ENCODE measurements at regions of chr1 and their contacts with region 1.

Region 1: GRCh38 chr1:32321712-32322291 is 14.2 kb downstream of the MARCKSL1 start:
- DNase-seq: no peak
- H3K4me3 ChIP-seq: no peak overlapping the region
- H3K27ac ChIP-seq: no peak overlapping the region
- H3K4me1 ChIP-seq: no peaks in the 10 kb centered on the region
- H3K27me3 ChIP-seq: no peaks in the 10 kb centered on the region
- CTCF ChIP-seq: no peak

Region 2: DNA sequence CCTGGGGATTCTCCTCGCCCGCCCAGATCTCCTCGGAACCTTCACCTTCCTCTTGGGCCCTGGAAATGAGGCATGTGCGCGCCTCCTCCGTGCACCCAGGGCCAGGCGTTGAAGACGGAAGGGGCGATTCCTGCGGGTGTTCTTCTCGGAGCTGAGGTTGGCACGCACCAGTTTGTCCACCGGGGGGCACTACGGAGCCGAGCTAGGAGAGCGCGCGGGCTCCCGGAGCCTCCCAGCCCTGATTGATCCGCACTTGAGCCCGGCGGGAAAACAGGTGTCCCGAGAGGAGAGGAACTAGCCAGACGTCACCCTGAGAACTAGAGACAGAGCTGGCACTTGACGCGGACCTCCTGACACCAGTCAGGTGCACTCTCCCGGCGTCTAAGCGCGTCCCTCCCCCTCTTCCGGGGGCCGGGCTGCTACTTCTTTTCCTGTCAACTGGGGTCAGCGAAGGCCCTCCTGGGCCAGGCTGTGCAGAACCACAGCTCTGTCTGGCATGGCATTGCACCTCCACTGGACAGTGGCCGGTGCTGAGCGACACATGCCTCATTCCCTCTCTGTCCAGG is 927.1 kb before region 1 on chr1:
- CTCF ChIA-PET with region 1: no interaction called
- dilution Hi-C with region 1: no loop called
- in situ Hi-C with region 1: no loop called
- intact Hi-C with region 1: no loop called
- DNase-seq: peak; percentile 87
- H3K4me3 ChIP-seq: no peak overlapping the region
- H3K27ac ChIP-seq: no peak overlapping the region
- H3K4me1 ChIP-seq: peaks cover 42% of the 10 kb centered on the region
- H3K27me3 ChIP-seq: no peaks in the 10 kb centered on the region
- CTCF ChIP-seq: peak; percentile 83 to 95

Region 3: GRCh38 chr1:32215629-32216480 is 105.9 kb before region 1 on chr1:
- CTCF ChIA-PET with region 1: no interaction called
- dilution Hi-C with region 1: no loop called
- in situ Hi-C with region 1: no loop called
- intact Hi-C with region 1: no loop called
- DNase-seq: peak; percentile 39
- H3K4me3 ChIP-seq: no peak overlapping the region
- H3K27ac ChIP-seq: no peak overlapping the region
- H3K4me1 ChIP-seq: peaks cover 12% of the 10 kb centered on the region
- H3K27me3 ChIP-seq: no peaks in the 10 kb centered on the region
- CTCF ChIP-seq: peak; percentile 84 to 91

Region 4: GRCh38 chr1:32307323-32307722 is 14.5 kb before region 1 on chr1:
- CTCF ChIA-PET with region 1: no interaction called
- dilution Hi-C with region 1: no loop called
- in situ Hi-C with region 1: no loop called
- intact Hi-C with region 1: no loop called
- DNase-seq: peak; percentile 47
- H3K4me3 ChIP-seq: no peak overlapping the region
- H3K27ac ChIP-seq: no peak overlapping the region
- H3K4me1 ChIP-seq: peaks cover 5% of the 10 kb centered on the region
- H3K27me3 ChIP-seq: no peaks in the 10 kb centered on the region
- CTCF ChIP-seq: no peak

Region 5: DNA sequence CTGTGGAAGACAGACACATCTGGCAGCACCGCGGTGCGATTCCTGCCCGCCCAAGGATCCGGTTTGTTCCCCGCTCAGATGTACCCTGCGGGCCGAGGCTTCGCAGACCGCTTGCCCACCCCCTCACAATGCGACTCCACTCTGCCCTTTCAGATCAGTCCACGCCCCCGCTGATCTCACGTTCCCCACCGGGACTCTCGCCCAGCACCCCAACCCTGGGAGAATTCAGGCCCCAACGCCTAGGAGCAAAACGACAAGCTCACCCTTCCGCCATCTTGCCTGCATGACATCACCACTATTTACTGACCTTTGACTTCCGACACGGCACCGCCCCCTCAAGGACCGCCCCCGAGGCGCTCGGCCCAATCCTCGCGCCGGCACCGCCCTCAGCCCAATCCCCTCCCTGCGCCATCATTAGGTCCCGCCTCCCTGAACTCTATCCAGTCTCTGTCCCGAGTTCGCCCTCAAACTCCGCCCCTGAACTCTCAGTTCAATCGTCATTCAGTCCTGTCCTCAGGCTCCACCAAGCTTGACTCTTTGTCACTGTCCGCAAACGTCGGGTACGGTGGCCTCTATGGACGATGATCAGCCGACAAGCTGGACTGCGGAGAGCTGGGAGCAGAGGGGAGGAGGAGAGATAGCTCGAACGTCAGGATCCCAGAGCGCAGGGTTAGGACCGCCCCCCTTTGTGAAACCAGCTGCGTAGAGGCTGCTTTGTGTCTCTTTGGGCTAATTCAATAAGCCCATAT is 72.5 kb after region 1 on chr1 and contains the start of gene BSDC1:
- CTCF ChIA-PET with region 1: no interaction called
- dilution Hi-C with region 1: loop called (anchors 5 kb)
- in situ Hi-C with region 1: no loop called
- intact Hi-C with region 1: no loop called
- DNase-seq: peak; percentile 99
- H3K4me3 ChIP-seq: peak within 1 kb of the TSS; percentile 64 to 91 (median 76)
- H3K27ac ChIP-seq: peak within 1 kb of the TSS; percentile 81
- H3K4me1 ChIP-seq: peaks cover 13% of the 10 kb centered on the region
- H3K27me3 ChIP-seq: no peaks in the 10 kb centered on the region
- CTCF ChIP-seq: no peak
- total RNA-seq, gene BSDC1: 47.6 to 78.5 TPM

Region 6: DNA sequence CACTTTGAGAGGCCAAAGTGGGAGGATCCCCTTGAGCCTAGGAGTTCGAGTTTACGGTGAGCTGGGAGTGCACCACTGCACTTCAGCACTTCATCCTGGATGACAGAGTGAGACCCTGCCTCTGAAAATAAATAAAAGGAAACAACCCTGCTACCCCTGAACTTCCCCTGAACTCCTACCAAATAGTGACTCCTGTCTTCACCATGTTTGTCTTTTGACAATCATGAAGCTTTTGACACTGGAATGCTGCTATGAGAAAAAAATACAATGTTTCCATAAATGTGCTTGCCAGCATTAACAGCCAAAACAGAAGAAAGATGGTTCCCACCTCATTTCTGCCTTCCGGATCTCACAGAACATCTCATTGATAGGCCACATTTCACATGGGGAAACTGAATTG is 227.8 kb after region 1 on chr1:
- CTCF ChIA-PET with region 1: no interaction called
- dilution Hi-C with region 1: no loop called
- in situ Hi-C with region 1: no loop called
- intact Hi-C with region 1: no loop called
- DNase-seq: no peak
- H3K4me3 ChIP-seq: no peak overlapping the region
- H3K27ac ChIP-seq: no peak overlapping the region
- H3K4me1 ChIP-seq: no peaks in the 10 kb centered on the region
- H3K27me3 ChIP-seq: no peaks in the 10 kb centered on the region
- CTCF ChIP-seq: no peak

Measured in mammary epithelial cell (primary cell).